PC-9 (cell line): ENCODE measurements at regions of chr2 and their contacts with region 1.

Region 1: DNA sequence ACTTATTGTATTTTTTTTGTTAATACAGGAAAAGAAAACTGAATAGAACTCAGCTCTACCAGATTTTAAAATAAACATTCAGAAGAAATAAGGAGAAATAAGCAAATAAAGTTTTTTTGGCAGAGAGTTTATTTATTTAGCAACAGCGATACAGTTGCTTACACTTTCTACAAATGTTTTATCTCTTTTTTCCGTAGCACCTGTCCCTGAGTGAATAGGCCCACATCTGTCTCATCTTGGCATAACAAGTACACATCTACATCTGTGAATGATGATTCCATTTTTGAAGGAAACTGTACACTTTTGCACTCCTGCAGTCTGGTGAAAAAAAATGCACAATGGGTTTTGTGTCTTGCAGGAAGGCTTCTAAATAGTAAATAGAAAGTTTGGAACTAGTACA is 783.6 kb upstream of the ZEB2 start:
- DNase-seq: no peak
- H3K4me3 ChIP-seq: no peak overlapping the region
- H3K27ac ChIP-seq: no peak overlapping the region
- H3K4me1 ChIP-seq: no peaks in the 10 kb centered on the region
- H3K27me3 ChIP-seq: no peaks in the 10 kb centered on the region
- CTCF ChIP-seq: no peak

Region 2: GRCh38 chr2:144438801-144439631 is 864.5 kb before region 1 on chr2:
- CTCF ChIA-PET with region 1: interaction called, 15 read pairs
- POLR2A ChIA-PET with region 1: no interaction called
- intact Hi-C with region 1: no loop called
- DNase-seq: no peak
- H3K4me3 ChIP-seq: no peak overlapping the region
- H3K27ac ChIP-seq: no peak overlapping the region
- H3K4me1 ChIP-seq: peaks cover 5% of the 10 kb centered on the region; the same call in 1 of the 2 replicates
- H3K27me3 ChIP-seq: no peaks in the 10 kb centered on the region
- CTCF ChIP-seq: no peak

Region 3: GRCh38 chr2:145258903-145259579 is 44.5 kb before region 1 on chr2:
- CTCF ChIA-PET with region 1: no interaction called
- POLR2A ChIA-PET with region 1: interaction called, 24 read pairs
- intact Hi-C with region 1: no loop called
- DNase-seq: no peak
- H3K4me3 ChIP-seq: no peak overlapping the region
- H3K27ac ChIP-seq: no peak overlapping the region
- H3K4me1 ChIP-seq: no peaks in the 10 kb centered on the region
- H3K27me3 ChIP-seq: no peaks in the 10 kb centered on the region
- CTCF ChIP-seq: no peak

Region 4: DNA sequence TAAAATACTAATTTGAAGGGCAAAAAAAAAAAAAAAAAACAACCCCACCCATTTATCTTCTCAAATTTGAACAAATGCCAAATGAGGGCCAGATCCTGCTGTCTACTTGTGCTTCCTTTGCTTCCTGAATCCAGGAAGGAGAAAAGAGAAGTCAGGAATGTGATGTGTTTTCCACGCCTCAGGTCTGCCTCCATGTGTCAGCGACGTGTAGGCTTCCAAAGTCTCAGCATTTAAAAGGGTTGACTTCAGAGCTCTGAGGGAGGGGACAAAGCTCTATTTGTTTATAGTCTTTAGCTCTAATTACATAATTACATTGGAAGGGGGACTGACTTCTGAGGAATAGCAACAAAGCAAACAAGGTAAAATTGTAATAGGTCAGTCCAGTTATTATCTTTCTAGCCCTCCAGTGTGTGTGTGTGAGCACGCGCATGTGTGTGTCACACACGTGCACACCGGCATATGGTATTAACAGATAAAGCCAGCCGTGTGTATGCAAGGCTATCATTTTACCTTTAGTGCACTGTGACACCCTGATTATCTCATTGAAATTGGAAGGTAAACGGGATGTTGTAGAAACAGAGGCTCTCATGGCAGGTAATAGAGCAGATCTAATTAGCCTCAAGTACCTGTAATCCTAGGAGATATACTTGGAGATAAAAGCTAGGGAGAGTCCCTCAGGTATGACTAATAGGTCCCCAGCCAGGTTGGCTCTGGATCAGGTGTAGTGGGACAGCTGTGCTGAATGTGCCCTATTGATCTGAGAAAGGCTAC is 127.8 kb after region 1 on chr2:
- CTCF ChIA-PET with region 1: no interaction called
- POLR2A ChIA-PET with region 1: no interaction called
- intact Hi-C with region 1: no loop called
- DNase-seq: peak in 1 of 2 experiments; percentile 43
- H3K4me3 ChIP-seq: no peak overlapping the region
- H3K27ac ChIP-seq: no peak overlapping the region
- H3K4me1 ChIP-seq: no peaks in the 10 kb centered on the region
- H3K27me3 ChIP-seq: no peaks in the 10 kb centered on the region
- CTCF ChIP-seq: no peak